CD8-positive, alpha-beta T cell (primary cell): ENCODE measurements at regions of chr12 and their contacts with region 1.

Region 1: GRCh38 chr12:121668750-121669520 is 519 bp downstream of the MORN3 start:
- DNase-seq: peak in 8 of 9 experiments; percentile 45 to 77 (median 72)
- ATAC-seq: no peak
- H3K4me3 ChIP-seq: no peak overlapping the region
- H3K4me3 Mint-ChIP-seq: peak overlapping the region; percentile 37
- H3K27ac ChIP-seq: peak overlapping the region in 1 of 2 experiments; percentile 0
- H3K27ac Mint-ChIP-seq: peak overlapping the region; percentile 88
- H3K4me1 ChIP-seq: peaks cover 60% of the 10 kb centered on the region
- H3K4me1 Mint-ChIP-seq: peaks cover 61% of the 10 kb centered on the region
- H3K27me3 ChIP-seq: no peaks in the 10 kb centered on the region
- H3K27me3 Mint-ChIP-seq: no peaks in the 10 kb centered on the region
- CTCF ChIP-seq: peak; percentile 75

Region 2: DNA sequence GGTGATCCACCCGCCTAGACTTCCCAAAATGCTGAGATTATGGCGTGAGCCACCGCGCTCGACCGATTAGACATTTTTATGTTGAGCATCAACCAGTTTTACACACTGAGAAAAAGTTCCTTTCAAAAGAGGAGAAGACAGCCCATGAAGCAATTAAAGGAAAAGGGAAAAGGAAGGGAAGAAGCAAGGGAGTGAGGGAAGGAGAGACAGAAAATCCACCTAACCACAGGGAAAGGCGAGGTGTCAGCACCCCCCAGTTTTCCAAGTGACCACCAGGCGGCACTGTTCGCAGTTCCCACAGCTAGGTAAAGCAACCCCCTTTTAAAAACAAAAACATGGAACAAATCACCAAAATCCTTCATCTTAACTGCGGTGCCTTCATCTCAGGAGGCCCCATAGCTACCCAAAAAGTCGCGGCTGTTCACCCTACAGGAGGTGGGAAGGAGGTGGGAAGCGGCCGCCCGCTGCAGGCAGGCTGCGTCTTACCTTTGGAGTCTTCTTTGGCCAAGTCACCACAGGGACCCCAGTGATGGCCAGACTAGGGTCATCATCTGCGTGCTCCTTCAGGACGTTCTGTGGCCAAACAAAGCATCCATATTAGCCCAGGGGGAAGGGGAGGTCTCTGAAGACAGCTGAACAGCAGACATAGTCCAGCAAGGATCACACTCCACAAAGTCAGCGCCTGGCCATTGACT is 174.7 kb before region 1 on chr12:
- CTCF ChIA-PET with region 1: interaction called, 85 read pairs
- POLR2A ChIA-PET with region 1: interaction called, 4 read pairs
- intact Hi-C with region 1: loop called in 1 of 2 experiments (anchors 1 kb)
- DNase-seq: peak; percentile 31 to 76 (median 67)
- ATAC-seq: peak; percentile 67
- H3K4me3 ChIP-seq: no peak overlapping the region
- H3K4me3 Mint-ChIP-seq: no peak overlapping the region
- H3K27ac ChIP-seq: no peak overlapping the region
- H3K27ac Mint-ChIP-seq: peak overlapping the region; percentile 27
- H3K4me1 ChIP-seq: peaks cover 16% of the 10 kb centered on the region
- H3K4me1 Mint-ChIP-seq: peaks cover 21% of the 10 kb centered on the region
- H3K27me3 ChIP-seq: no peaks in the 10 kb centered on the region
- H3K27me3 Mint-ChIP-seq: no peaks in the 10 kb centered on the region
- CTCF ChIP-seq: peak; percentile 87

Region 3: GRCh38 chr12:121536899-121537813 is 131.8 kb before region 1 on chr12:
- CTCF ChIA-PET with region 1: interaction called, 4 read pairs
- POLR2A ChIA-PET with region 1: interaction called, 3 read pairs
- intact Hi-C with region 1: loop called in 1 of 2 experiments (anchors 1 kb)
- DNase-seq: peak in 8 of 9 experiments; percentile 22 to 83 (median 58)
- ATAC-seq: peak; percentile 5
- H3K4me3 ChIP-seq: peak overlapping the region; percentile 52 to 68
- H3K4me3 Mint-ChIP-seq: peak overlapping the region; percentile 80
- H3K27ac ChIP-seq: peak overlapping the region; percentile 80 to 83
- H3K27ac Mint-ChIP-seq: peak overlapping the region; percentile 96
- H3K4me1 ChIP-seq: peaks cover 34% of the 10 kb centered on the region
- H3K4me1 Mint-ChIP-seq: peaks cover 43% of the 10 kb centered on the region
- H3K27me3 ChIP-seq: no peaks in the 10 kb centered on the region
- H3K27me3 Mint-ChIP-seq: no peaks in the 10 kb centered on the region
- CTCF ChIP-seq: no peak

Region 4: DNA sequence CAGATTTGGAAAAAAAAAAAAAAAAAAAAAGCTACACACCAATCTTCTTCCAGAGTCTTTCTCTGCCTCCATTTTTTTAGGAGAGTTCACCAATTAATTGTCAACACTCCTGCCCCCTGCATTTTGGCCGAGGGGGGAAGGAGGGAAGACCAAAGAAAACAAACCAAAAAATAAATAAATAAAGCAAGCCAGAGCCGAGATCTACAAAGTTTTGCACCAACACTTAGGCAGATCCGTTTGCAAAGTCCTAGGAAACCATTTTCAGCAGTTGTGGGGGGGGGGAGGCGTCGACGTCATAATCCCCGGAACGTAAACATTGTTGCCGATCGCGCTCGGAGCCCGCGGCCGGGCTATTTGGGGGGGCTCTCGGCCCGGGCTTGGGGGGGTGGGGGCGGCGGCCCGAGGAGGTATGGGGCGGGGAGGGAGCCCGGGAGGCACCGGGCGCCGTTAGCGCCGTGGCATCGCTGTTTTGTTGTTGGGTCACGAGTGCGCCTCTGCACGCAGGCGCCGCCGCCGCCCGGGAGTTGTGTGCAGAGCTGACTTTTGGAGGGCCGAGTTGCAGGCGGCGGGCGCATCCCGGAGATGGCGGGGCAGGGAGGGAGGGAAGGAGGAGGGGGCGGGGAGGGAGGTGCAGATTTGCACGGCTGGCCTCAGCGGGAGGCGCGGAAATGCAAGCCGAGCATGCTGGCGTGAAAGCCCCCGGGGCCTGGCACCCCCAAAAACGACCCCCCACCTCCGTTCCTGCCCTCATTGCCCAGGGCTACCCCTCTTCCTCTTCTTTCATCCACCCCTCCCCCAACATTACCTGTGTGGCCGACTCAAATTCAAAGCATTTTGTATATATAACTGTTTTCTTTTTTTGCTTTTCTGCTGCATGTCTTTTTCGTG is 88.7 kb before region 1 on chr12:
- CTCF ChIA-PET with region 1: interaction called, 23 read pairs
- POLR2A ChIA-PET with region 1: interaction called, 12 read pairs
- intact Hi-C with region 1: loop called in 1 of 2 experiments (anchors 5 kb)
- DNase-seq: peak; percentile 63 to 91 (median 82)
- ATAC-seq: peak; percentile 62
- H3K4me3 ChIP-seq: peak overlapping the region; percentile 58 to 73
- H3K4me3 Mint-ChIP-seq: peak overlapping the region; percentile 95
- H3K27ac ChIP-seq: peak overlapping the region; percentile 84 to 85
- H3K27ac Mint-ChIP-seq: peak overlapping the region; percentile 98
- H3K4me1 ChIP-seq: peaks cover 42% of the 10 kb centered on the region
- H3K4me1 Mint-ChIP-seq: peaks cover 51% of the 10 kb centered on the region
- H3K27me3 ChIP-seq: no peaks in the 10 kb centered on the region
- H3K27me3 Mint-ChIP-seq: no peaks in the 10 kb centered on the region
- CTCF ChIP-seq: no peak

Region 5: DNA sequence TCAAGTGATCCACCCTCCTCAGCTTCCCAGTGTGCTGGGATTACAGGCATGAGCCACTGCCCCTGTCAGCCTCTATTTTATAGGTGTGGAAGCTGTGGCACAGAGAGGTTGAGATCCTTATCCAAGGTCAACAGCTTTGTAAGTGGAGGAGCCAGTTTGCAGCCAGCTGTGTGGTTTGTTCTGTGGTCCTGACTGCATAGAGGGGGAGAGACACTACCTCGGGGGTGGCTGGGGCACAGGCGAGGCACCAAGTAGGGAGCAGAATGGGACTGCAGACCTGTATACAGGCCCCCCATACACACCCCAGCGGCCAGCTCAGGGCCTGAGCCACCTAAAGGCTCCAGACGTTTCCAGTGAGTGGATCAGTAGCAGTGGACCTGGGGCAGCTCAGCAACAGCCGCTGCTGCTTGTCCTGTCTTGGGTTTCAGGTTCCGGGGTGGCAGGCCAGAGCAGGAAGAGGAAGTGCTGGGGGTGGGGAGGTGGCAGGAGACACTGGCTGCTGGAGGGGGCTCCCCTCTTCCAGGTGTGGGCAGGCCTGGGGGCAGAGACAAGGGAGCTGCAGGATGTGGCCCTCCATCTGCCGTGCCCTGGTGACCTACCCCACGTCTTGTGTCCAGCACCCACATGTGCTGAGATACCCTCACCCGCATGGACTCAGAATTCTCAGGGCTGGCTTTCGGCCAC is 31.6 kb before region 1 on chr12:
- CTCF ChIA-PET with region 1: interaction called, 12 read pairs
- POLR2A ChIA-PET with region 1: interaction called, 9 read pairs
- intact Hi-C with region 1: no loop called
- DNase-seq: peak in 8 of 9 experiments; percentile 47 to 83 (median 66)
- ATAC-seq: peak; percentile 77
- H3K4me3 ChIP-seq: peak overlapping the region; percentile 27 to 53
- H3K4me3 Mint-ChIP-seq: peak overlapping the region; percentile 62
- H3K27ac ChIP-seq: peak overlapping the region; percentile 62 to 71
- H3K27ac Mint-ChIP-seq: peak overlapping the region; percentile 84
- H3K4me1 ChIP-seq: peaks cover 53% of the 10 kb centered on the region
- H3K4me1 Mint-ChIP-seq: peaks cover 63% of the 10 kb centered on the region
- H3K27me3 ChIP-seq: no peaks in the 10 kb centered on the region
- H3K27me3 Mint-ChIP-seq: no peaks in the 10 kb centered on the region
- CTCF ChIP-seq: no peak

Region 6: DNA sequence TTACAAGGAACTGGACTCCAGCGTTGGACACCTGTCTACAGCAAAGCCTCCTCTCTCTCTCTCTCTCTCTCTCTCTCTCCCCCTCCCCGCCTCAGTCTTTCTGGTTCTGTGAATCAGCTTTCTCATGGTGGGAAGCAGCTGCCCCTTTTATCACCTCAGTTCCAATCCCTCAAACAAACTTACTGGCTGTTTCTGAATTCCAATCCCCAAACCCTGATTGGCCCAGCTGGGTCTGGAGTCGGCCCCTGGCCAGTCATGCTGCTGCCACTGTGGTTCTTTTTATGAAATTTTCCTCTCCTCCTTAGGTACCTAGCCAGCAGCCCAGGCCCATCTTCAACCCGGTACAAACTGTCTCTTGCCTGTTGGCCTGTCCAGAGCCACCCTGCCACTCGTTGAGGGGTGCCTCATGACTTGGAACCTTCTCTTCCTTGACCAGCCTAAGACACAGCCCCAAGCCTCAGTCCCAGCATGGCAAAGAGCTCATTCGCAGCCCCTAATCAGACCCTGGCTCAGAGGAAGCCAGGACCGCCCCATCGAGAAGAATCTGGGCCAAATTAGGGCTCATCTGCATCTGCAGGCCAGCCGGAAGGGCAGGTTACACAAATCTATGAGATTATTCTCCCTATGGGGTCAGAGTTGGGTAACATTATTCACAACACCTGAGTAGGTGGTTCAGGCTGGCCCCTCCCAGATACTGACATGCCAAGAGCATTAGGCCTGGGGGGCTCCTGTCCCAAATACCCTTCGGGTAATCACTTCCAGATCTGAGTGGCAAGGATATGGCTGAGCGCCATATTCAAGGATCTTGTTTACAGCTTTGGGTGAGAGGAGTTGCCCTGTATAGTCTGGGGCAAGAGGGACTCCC is 10.0 kb after region 1 on chr12:
- CTCF ChIA-PET with region 1: interaction called, 13 read pairs
- POLR2A ChIA-PET with region 1: interaction called, 6 read pairs
- intact Hi-C with region 1: no loop called
- DNase-seq: no peak
- ATAC-seq: no peak
- H3K4me3 ChIP-seq: no peak overlapping the region
- H3K4me3 Mint-ChIP-seq: no peak overlapping the region
- H3K27ac ChIP-seq: no peak overlapping the region
- H3K27ac Mint-ChIP-seq: peak overlapping the region; percentile 83
- H3K4me1 ChIP-seq: peaks cover 5% of the 10 kb centered on the region
- H3K4me1 Mint-ChIP-seq: peaks cover 12% of the 10 kb centered on the region
- H3K27me3 ChIP-seq: no peaks in the 10 kb centered on the region
- H3K27me3 Mint-ChIP-seq: no peaks in the 10 kb centered on the region
- CTCF ChIP-seq: no peak

Region 7: GRCh38 chr12:121701667-121702277 is 32.8 kb after region 1 on chr12:
- CTCF ChIA-PET with region 1: no interaction called
- POLR2A ChIA-PET with region 1: no interaction called
- intact Hi-C with region 1: no loop called
- DNase-seq: no peak
- ATAC-seq: no peak
- H3K4me3 ChIP-seq: no peak overlapping the region
- H3K4me3 Mint-ChIP-seq: no peak overlapping the region
- H3K27ac ChIP-seq: no peak overlapping the region
- H3K27ac Mint-ChIP-seq: no peak overlapping the region
- H3K4me1 ChIP-seq: no peaks in the 10 kb centered on the region
- H3K4me1 Mint-ChIP-seq: peaks cover 2% of the 10 kb centered on the region
- H3K27me3 ChIP-seq: no peaks in the 10 kb centered on the region
- H3K27me3 Mint-ChIP-seq: no peaks in the 10 kb centered on the region
- CTCF ChIP-seq: no peak

Region 8: DNA sequence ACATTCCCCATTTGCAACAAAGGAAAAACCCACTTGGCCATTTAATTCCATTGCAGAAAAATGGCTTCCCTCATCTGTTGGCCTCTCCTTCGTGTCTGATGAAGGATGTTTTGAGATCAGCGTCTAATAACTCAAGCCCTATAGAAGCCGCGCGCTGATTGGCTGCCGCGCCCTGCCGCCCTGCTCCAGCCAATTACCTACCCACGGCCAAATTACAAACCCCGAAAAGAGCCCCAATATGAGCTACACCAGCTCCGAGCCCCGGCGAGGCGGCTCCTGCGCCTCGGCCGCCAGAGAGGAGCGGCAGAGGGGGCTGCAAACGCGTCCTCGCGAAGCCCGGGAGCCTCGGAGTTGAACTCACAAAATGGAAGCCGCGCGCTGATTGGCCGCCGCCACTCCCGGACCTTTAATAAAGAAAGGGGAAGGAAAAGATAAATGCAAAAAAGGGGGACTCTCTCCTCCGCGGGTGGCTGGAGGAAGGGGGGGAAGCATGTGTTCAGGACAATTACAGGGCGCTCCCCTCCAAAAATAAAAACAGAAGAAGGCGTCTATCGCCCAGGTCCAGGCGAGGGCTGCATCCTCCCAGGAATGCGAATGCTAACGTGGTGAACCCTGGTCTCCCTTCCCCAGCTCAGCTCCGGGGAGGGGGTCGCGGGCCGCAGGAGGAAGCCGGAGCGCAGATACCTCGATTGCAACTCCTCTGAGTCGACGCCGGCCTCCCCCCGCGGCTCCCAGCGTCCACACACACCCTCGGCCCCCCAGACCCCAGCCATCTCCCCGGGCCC is 134.1 kb after region 1 on chr12:
- CTCF ChIA-PET with region 1: no interaction called
- POLR2A ChIA-PET with region 1: interaction called, 15 read pairs
- intact Hi-C with region 1: no loop called
- DNase-seq: peak; percentile 79 to 95 (median 88)
- ATAC-seq: peak; percentile 43
- H3K4me3 ChIP-seq: peak overlapping the region; percentile 73 to 82
- H3K4me3 Mint-ChIP-seq: peak overlapping the region; percentile 94
- H3K27ac ChIP-seq: peak overlapping the region; percentile 94 to 98
- H3K27ac Mint-ChIP-seq: peak overlapping the region; percentile 99
- H3K4me1 ChIP-seq: peaks cover 34% of the 10 kb centered on the region
- H3K4me1 Mint-ChIP-seq: peaks cover 28% of the 10 kb centered on the region
- H3K27me3 ChIP-seq: no peaks in the 10 kb centered on the region
- H3K27me3 Mint-ChIP-seq: no peaks in the 10 kb centered on the region
- CTCF ChIP-seq: no peak

Region 9: GRCh38 chr12:122051231-122051876 is 382.4 kb after region 1 on chr12:
- CTCF ChIA-PET with region 1: no interaction called
- POLR2A ChIA-PET with region 1: no interaction called
- intact Hi-C with region 1: no loop called
- DNase-seq: no peak
- ATAC-seq: no peak
- H3K4me3 ChIP-seq: no peak overlapping the region
- H3K4me3 Mint-ChIP-seq: no peak overlapping the region
- H3K27ac ChIP-seq: no peak overlapping the region
- H3K27ac Mint-ChIP-seq: no peak overlapping the region
- H3K4me1 ChIP-seq: peaks cover 4% of the 10 kb centered on the region
- H3K4me1 Mint-ChIP-seq: peaks cover 7% of the 10 kb centered on the region
- H3K27me3 ChIP-seq: no peaks in the 10 kb centered on the region
- H3K27me3 Mint-ChIP-seq: no peaks in the 10 kb centered on the region
- CTCF ChIP-seq: no peak